Endothelial cell of umbilical vein (primary cell): ENCODE measurements at regions of chr11 and their contacts with region 1.

Region 1: DNA sequence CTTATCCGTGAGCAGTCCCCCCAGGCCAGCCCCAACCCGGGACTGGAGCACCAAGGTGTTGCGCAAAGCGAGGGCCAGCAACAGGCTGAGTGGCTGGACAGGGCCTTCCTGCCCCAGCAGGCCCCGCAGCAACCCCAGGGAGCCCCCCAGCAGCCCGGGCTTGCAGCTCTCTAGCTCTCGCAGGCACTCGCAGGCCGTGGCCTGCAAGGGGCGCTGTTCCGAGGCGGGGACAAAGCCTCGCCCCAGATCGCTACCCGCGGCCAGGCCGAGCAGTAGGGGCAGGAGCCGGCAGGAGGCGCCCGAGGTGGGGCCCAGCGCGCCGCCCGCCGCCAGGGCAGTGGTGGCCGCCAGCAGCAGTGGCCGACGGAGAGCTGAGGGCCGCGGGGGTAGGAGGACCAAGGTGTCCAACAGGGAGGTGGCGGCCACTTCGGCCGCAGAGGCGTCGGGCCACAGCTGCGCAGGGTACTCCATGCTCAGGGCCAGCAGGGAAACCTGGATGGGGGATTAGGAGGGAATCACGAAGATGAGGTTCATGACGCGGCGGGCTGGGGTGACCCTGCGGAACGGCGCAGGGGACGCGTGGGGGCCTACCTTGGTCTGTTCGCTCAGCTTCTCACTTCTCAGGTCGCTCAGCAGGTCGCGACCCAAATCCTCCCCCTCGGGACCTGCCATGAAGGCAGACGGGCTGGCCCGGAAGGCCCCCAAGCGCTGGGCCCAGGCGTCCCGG is 762 bp downstream of the AP5B1 start:
- DNase-seq: peak; percentile 85
- H3K4me3 ChIP-seq: peak overlapping the region; percentile 55 to 74 (median 73)
- H3K27ac ChIP-seq: peak overlapping the region; percentile 81
- H3K4me1 ChIP-seq: peaks cover 5% of the 10 kb centered on the region
- H3K27me3 ChIP-seq: peaks cover under 1 to 2% of the 10 kb centered on the region in 2 experiments
- CTCF ChIP-seq: peak; percentile 96 to 99
- POLR2A ChIP-seq: no peak

Region 2: DNA sequence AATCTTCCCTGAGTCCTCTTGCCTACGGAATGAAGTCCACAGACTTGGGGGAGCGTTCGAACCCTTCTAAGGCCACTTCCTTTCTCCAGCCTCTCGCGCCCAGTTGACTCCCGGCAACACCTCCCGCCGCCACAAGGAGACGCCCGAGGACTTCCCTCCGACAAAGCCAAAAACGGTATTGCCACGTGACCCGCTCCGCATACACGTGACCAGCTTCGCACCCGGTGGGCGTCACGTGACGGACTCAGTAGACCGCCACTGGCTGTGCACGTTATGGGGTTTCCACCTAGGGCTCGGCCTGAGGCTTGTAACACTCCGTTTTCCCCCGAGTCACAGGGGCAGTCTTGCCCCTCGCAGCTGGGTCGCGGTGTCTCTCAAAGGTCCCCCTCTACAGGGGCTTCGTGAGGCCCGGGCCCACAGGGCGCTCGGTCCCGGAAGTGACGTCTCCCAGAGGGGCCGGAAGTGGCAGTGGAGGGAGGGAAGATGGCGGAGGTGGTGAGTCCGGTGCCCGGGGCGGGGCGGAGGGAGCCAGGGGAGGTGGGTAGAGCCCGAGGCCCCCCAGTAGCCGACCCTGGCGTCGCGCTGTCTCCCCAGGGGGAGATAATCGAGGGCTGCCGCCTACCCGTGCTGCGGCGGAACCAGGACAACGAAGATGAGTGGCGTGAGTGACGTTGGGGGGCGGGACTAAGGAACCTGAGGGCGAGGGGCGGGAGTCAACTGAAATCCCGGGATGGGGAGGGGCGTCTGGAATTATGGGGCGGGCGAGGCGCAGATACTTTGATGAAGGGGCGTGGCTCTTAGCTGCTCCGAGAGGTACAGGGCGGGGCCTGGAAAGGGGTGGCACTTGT is 68.0 kb before region 1 on chr11 and contains the start of gene KAT5:
- CTCF ChIA-PET with region 1: interaction called, 30 read pairs
- POLR2A ChIA-PET with region 1: interaction called, 4 read pairs
- dilution Hi-C with region 1: no loop called
- intact Hi-C with region 1: no loop called
- DNase-seq: peak; percentile 98
- H3K4me3 ChIP-seq: peak within 1 kb of the TSS; percentile 19 to 66 (median 49)
- H3K27ac ChIP-seq: peak within 1 kb of the TSS; percentile 89
- H3K4me1 ChIP-seq: peaks cover 6% of the 10 kb centered on the region
- H3K27me3 ChIP-seq: no peaks in the 10 kb centered on the region
- CTCF ChIP-seq: peak; percentile 93 to 97
- POLR2A ChIP-seq: no peak
- total RNA-seq, gene KAT5: 48.8 and 50.2 TPM in 2 replicates

Region 3: GRCh38 chr11:65739022-65739421 is 41.0 kb before region 1 on chr11:
- CTCF ChIA-PET with region 1: interaction called, 10 read pairs
- POLR2A ChIA-PET with region 1: no interaction called
- dilution Hi-C with region 1: no loop called
- intact Hi-C with region 1: no loop called
- DNase-seq: no peak
- H3K4me3 ChIP-seq: no peak overlapping the region
- H3K27ac ChIP-seq: no peak overlapping the region
- H3K4me1 ChIP-seq: no peaks in the 10 kb centered on the region
- H3K27me3 ChIP-seq: peaks cover 11 to 19% of the 10 kb centered on the region in 2 experiments
- CTCF ChIP-seq: no peak
- POLR2A ChIP-seq: no peak

Region 4: GRCh38 chr11:65791691-65792213 is 11.7 kb after region 1 on chr11:
- CTCF ChIA-PET with region 1: interaction called, 71 read pairs
- POLR2A ChIA-PET with region 1: no interaction called
- dilution Hi-C with region 1: no loop called
- intact Hi-C with region 1: no loop called
- DNase-seq: no peak
- H3K4me3 ChIP-seq: no peak overlapping the region
- H3K27ac ChIP-seq: no peak overlapping the region
- H3K4me1 ChIP-seq: no peaks in the 10 kb centered on the region
- H3K27me3 ChIP-seq: peaks cover 25 to 26% of the 10 kb centered on the region in 2 experiments
- CTCF ChIP-seq: no peak
- POLR2A ChIP-seq: no peak

Region 5: DNA sequence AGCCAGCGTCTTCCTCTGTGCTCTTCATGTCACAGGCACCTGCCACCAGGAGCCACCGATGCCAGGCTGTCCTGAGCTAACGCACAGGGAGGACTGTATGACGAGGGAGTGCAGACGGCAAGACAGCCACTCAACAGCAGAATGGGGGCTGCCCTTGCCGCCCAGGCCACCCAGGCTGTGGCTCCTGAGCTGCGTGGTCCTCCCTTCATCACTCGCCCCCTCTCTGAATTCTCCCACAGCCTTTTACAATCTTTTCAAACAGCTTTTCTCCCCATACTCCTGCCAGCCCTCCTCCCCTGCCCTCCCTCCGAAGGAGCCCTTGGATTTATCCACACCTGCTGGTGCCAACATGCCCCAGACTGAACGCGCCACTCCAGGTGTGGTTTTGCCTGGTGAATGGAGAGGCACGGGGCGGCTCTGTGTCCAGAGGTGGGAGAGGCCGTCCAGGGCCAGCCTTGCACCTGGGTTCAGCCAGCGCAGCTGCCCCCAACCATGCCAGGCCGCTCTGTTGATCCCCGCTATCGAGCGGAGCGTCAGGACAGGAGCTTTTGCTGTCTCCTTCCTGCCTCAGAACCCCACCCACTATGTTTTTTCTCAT is 28.8 kb after region 1 on chr11:
- CTCF ChIA-PET with region 1: interaction called, 39 read pairs
- POLR2A ChIA-PET with region 1: no interaction called
- dilution Hi-C with region 1: no loop called
- intact Hi-C with region 1: no loop called
- DNase-seq: no peak
- H3K4me3 ChIP-seq: no peak overlapping the region
- H3K27ac ChIP-seq: no peak overlapping the region
- H3K4me1 ChIP-seq: no peaks in the 10 kb centered on the region
- H3K27me3 ChIP-seq: peaks cover 12 to 15% of the 10 kb centered on the region in 2 experiments
- CTCF ChIP-seq: no peak
- POLR2A ChIP-seq: no peak

Region 6: GRCh38 chr11:65826962-65827735 is 47.1 kb after region 1 on chr11:
- CTCF ChIA-PET with region 1: interaction called, 14 read pairs
- POLR2A ChIA-PET with region 1: no interaction called
- dilution Hi-C with region 1: no loop called
- intact Hi-C with region 1: no loop called
- DNase-seq: no peak
- H3K4me3 ChIP-seq: no peak overlapping the region
- H3K27ac ChIP-seq: no peak overlapping the region
- H3K4me1 ChIP-seq: no peaks in the 10 kb centered on the region
- H3K27me3 ChIP-seq: peaks cover 12 to 19% of the 10 kb centered on the region in 2 experiments
- CTCF ChIP-seq: no peak
- POLR2A ChIP-seq: no peak

Region 7: GRCh38 chr11:65988791-65989592 is 209.0 kb after region 1 on chr11:
- CTCF ChIA-PET with region 1: interaction called, 41 read pairs
- POLR2A ChIA-PET with region 1: no interaction called
- dilution Hi-C with region 1: no loop called
- intact Hi-C with region 1: loop called (anchors 2 kb)
- DNase-seq: peak; percentile 97
- H3K4me3 ChIP-seq: no peak overlapping the region
- H3K27ac ChIP-seq: no peak overlapping the region
- H3K4me1 ChIP-seq: no peaks in the 10 kb centered on the region
- H3K27me3 ChIP-seq: no peaks in the 10 kb centered on the region
- CTCF ChIP-seq: peak; percentile 86 to 99
- POLR2A ChIP-seq: no peak